Posterior cingulate gyrus (tissue), 11 donors: ENCODE measurements at regions of chr4 and their contacts with region 1.

Region 1: GRCh38 chr4:71553605-71554004 is 214.8 kb downstream of the SLC4A4 start:
- DNase-seq: no peak

Region 2: GRCh38 chr4:71184195-71184781 is 369.3 kb before region 1 on chr4:
- intact Hi-C with region 1: loop called (anchors 5 kb)
- DNase-seq: peak in 5 of 10 donors; percentile 14 to 54 (median 36)

Region 3: GRCh38 chr4:71195924-71196323 is 357.7 kb before region 1 on chr4:
- intact Hi-C with region 1: no loop called
- DNase-seq: no peak

Region 4: GRCh38 chr4:71229477-71230270 is 323.9 kb before region 1 on chr4:
- intact Hi-C with region 1: loop called (anchors 5 kb)
- DNase-seq: peak in 6 of 10 donors; percentile 27 to 92 (median 53)